ENCODE measurements at regions of chr4 and their contacts with region 1.

Region 1: DNA sequence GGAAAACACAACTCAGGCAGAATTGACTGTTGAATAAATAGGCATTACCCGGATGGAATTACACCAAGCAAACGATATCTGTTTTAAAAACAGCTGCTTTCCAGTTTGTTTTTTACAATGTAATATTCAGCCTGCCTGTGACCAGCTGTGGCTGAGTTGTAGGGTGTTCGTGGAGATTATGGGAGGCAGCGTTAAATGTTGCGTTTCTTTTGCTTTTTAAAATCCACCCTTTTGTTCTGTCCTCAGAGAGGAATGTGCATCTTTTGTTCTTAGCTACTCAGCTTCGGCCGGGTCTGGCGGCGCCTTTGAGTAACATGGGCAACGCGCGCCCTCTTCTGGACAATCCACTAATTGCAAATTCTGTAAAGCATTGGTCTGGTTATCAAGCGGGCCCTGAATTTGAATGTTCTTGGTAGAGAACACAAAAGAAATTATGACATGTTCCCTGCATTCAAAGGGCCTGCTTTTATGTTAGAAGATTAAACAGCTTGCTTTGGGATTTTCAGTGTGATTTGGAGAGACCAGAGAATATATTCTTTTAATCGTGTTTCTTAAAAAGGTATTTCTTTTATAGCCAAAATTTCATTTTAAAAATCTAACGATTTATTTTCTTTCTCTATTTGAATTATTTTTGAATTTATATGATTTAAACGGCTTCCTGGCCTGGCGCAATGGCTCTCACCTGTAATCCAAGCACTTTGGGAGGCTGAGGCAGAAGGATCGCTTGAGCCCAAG is 76.3 kb upstream of the TRIM2 start:
- DNase-seq: peak; percentile 76 to 91 (median 87)
- ATAC-seq: peak; percentile 94
- H3K4me3 ChIP-seq: no peak overlapping the region
- H3K4me3 Mint-ChIP-seq: no peak overlapping the region
- H3K27ac ChIP-seq: no peak overlapping the region
- H3K27ac Mint-ChIP-seq: peak overlapping the region; percentile 46
- H3K4me1 ChIP-seq: peaks cover 3% of the 10 kb centered on the region
- H3K4me1 Mint-ChIP-seq: peaks cover 6% of the 10 kb centered on the region
- H3K27me3 ChIP-seq: no peaks in the 10 kb centered on the region
- H3K27me3 Mint-ChIP-seq: no peaks in the 10 kb centered on the region
- CTCF ChIP-seq: peak; percentile 92

Region 2: GRCh38 chr4:152850377-152850776 is 277.6 kb before region 1 on chr4:
- CTCF ChIA-PET with region 1: interaction called, 44 read pairs
- POLR2A ChIA-PET with region 1: interaction called, 3 read pairs
- intact Hi-C with region 1: loop called (anchors 1 kb)
- DNase-seq: peak in 7 of 9 experiments; percentile 18 to 57 (median 33)
- ATAC-seq: peak; percentile 69
- H3K4me3 ChIP-seq: no peak overlapping the region
- H3K4me3 Mint-ChIP-seq: no peak overlapping the region
- H3K27ac ChIP-seq: no peak overlapping the region
- H3K27ac Mint-ChIP-seq: no peak overlapping the region
- H3K4me1 ChIP-seq: peaks cover 4% of the 10 kb centered on the region
- H3K4me1 Mint-ChIP-seq: peaks cover 24% of the 10 kb centered on the region
- H3K27me3 ChIP-seq: no peaks in the 10 kb centered on the region
- H3K27me3 Mint-ChIP-seq: no peaks in the 10 kb centered on the region
- CTCF ChIP-seq: no peak

Region 3: DNA sequence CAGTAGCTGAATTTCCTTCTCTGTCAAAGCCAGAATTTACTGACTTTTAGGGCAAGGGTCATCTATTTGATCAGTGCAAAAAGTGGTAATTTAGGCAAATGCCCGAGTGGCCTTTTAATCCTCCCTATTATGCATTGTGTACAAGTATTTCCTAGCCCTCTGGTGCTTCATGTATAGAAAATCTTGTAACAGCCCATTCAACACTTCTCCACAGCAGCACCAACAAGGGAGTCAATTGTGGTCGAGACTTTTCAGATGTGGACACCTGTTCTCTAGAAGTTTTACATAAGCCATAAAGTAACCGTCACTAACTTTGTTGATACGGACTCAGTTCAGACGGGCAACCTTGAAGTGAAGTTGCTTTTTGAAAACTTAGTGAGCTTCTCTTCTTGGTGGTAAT is 242.7 kb before region 1 on chr4:
- CTCF ChIA-PET with region 1: no interaction called
- POLR2A ChIA-PET with region 1: no interaction called
- intact Hi-C with region 1: no loop called
- DNase-seq: no peak
- ATAC-seq: no peak
- H3K4me3 ChIP-seq: no peak overlapping the region
- H3K4me3 Mint-ChIP-seq: no peak overlapping the region
- H3K27ac ChIP-seq: no peak overlapping the region
- H3K27ac Mint-ChIP-seq: no peak overlapping the region
- H3K4me1 ChIP-seq: no peaks in the 10 kb centered on the region
- H3K4me1 Mint-ChIP-seq: no peaks in the 10 kb centered on the region
- H3K27me3 ChIP-seq: no peaks in the 10 kb centered on the region
- H3K27me3 Mint-ChIP-seq: no peaks in the 10 kb centered on the region
- CTCF ChIP-seq: no peak

Region 4: DNA sequence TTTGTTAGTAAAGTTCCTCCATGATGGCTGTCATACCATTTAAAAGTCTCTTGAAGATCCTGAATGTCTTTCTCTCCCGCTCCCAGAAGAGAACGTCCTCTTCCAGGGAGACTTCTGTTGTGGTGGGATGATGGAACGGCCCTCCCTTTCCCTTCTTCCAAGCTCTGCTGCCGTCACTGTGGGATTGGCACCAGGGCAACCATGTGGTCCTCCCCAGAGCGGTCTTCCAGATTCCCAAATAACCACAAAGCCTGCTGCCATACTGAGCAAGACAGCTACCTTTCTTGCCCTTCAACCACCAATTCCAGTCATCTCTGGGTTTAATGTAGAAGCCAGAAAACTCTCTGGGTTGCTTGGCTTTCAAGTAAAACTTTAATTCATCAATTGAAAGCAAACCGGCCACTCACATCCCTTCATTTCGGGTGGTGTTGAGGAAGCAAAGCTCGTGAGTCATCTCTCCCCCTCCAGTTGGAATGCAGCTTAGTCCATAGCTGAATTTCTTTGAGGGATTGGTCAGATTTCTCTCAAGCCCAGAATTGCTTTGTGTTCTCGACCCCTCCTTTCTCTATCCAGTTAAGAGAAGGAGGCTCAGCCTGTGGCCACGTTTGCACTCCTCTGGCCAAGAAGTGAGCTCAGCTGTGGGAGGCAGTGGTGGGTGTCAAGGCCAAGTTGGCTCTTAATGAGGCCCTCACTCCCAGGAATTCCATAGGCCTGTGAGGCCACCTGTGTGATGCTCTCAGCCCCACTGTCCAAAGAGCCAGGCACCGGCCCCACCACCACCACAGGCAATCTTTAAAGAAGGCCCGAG is 154.9 kb before region 1 on chr4:
- CTCF ChIA-PET with region 1: no interaction called
- POLR2A ChIA-PET with region 1: no interaction called
- intact Hi-C with region 1: no loop called
- DNase-seq: no peak
- ATAC-seq: no peak
- H3K4me3 ChIP-seq: no peak overlapping the region
- H3K4me3 Mint-ChIP-seq: no peak overlapping the region
- H3K27ac ChIP-seq: no peak overlapping the region
- H3K27ac Mint-ChIP-seq: no peak overlapping the region
- H3K4me1 ChIP-seq: no peaks in the 10 kb centered on the region
- H3K4me1 Mint-ChIP-seq: no peaks in the 10 kb centered on the region
- H3K27me3 ChIP-seq: no peaks in the 10 kb centered on the region
- H3K27me3 Mint-ChIP-seq: no peaks in the 10 kb centered on the region
- CTCF ChIP-seq: no peak

Region 5: GRCh38 chr4:153083447-153083947 is 44.4 kb before region 1 on chr4:
- CTCF ChIA-PET with region 1: interaction called, 467 read pairs
- POLR2A ChIA-PET with region 1: interaction called, 20 read pairs
- intact Hi-C with region 1: loop called (anchors 1 kb)
- DNase-seq: peak in 8 of 9 experiments; percentile 14 to 82 (median 47)
- ATAC-seq: peak; percentile 42
- H3K4me3 ChIP-seq: no peak overlapping the region
- H3K4me3 Mint-ChIP-seq: no peak overlapping the region
- H3K27ac ChIP-seq: no peak overlapping the region
- H3K27ac Mint-ChIP-seq: no peak overlapping the region
- H3K4me1 ChIP-seq: peaks cover 57% of the 10 kb centered on the region
- H3K4me1 Mint-ChIP-seq: peaks cover 46% of the 10 kb centered on the region
- H3K27me3 ChIP-seq: no peaks in the 10 kb centered on the region
- H3K27me3 Mint-ChIP-seq: no peaks in the 10 kb centered on the region
- CTCF ChIP-seq: peak; percentile 77

Region 6: DNA sequence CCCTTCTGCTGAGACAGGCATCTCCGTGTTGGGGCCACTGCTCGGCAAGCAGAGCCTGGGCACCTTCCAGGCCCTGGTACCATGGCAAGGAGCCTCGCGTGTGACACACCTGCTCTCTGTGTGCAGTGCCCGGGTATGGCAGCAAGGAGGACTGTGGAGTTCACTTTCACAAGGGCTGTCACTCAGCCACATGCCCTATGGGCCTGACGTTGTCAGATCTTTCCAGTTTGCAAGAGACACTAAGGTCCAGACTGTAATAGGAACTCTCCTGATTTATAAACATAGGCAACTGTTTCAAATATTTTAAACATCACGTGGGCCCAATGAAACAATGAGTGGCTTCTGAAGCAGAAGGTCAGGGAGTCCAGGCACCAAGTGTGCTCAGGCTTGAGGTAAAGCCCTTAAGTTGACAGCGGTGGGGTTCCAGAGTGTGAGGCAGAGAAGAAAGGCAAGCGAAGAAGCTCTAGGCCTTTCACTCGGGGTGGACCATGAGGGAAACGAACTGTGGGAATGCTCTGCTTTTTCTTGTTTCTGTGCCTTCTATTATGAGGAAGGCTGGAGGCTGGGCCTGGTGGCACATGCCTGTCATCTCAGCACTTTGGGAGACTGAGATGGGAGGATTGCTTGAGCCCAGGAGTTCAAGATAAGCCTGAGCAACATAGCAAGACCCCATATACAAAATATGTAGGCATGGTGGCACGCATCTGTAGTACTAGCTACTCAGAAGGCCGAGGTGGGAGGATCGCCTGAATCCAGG is 32.3 kb before region 1 on chr4:
- CTCF ChIA-PET with region 1: interaction called, 64 read pairs
- POLR2A ChIA-PET with region 1: no interaction called
- intact Hi-C with region 1: no loop called
- DNase-seq: no peak
- ATAC-seq: no peak
- H3K4me3 ChIP-seq: no peak overlapping the region
- H3K4me3 Mint-ChIP-seq: no peak overlapping the region
- H3K27ac ChIP-seq: no peak overlapping the region
- H3K27ac Mint-ChIP-seq: no peak overlapping the region
- H3K4me1 ChIP-seq: peaks cover 4% of the 10 kb centered on the region
- H3K4me1 Mint-ChIP-seq: peaks cover 4% of the 10 kb centered on the region
- H3K27me3 ChIP-seq: no peaks in the 10 kb centered on the region
- H3K27me3 Mint-ChIP-seq: no peaks in the 10 kb centered on the region
- CTCF ChIP-seq: no peak

Region 7: GRCh38 chr4:153115322-153116290 is 12.3 kb before region 1 on chr4:
- CTCF ChIA-PET with region 1: interaction called, 113 read pairs
- POLR2A ChIA-PET with region 1: interaction called, 7 read pairs
- intact Hi-C with region 1: loop called in 1 of 2 experiments (anchors 1 kb)
- DNase-seq: peak; percentile 41 to 92 (median 76)
- ATAC-seq: peak; percentile 52
- H3K4me3 ChIP-seq: peak overlapping the region in 1 of 2 experiments; percentile 31
- H3K4me3 Mint-ChIP-seq: no peak overlapping the region
- H3K27ac ChIP-seq: peak overlapping the region; percentile 58 to 78
- H3K27ac Mint-ChIP-seq: no peak overlapping the region
- H3K4me1 ChIP-seq: peaks cover 64% of the 10 kb centered on the region
- H3K4me1 Mint-ChIP-seq: peaks cover 9% of the 10 kb centered on the region
- H3K27me3 ChIP-seq: no peaks in the 10 kb centered on the region
- H3K27me3 Mint-ChIP-seq: no peaks in the 10 kb centered on the region
- CTCF ChIP-seq: no peak

Region 8: GRCh38 chr4:153643406-153644383 is 515.8 kb after region 1 on chr4:
- CTCF ChIA-PET with region 1: interaction called, 17 read pairs
- POLR2A ChIA-PET with region 1: no interaction called
- intact Hi-C with region 1: no loop called
- DNase-seq: peak in 2 of 9 experiments; percentile 63 to 75
- ATAC-seq: peak; percentile 99
- H3K4me3 ChIP-seq: no peak overlapping the region
- H3K4me3 Mint-ChIP-seq: no peak overlapping the region
- H3K27ac ChIP-seq: no peak overlapping the region
- H3K27ac Mint-ChIP-seq: peak overlapping the region; percentile 49
- H3K4me1 ChIP-seq: no peaks in the 10 kb centered on the region
- H3K4me1 Mint-ChIP-seq: peaks cover 3% of the 10 kb centered on the region
- H3K27me3 ChIP-seq: no peaks in the 10 kb centered on the region
- H3K27me3 Mint-ChIP-seq: no peaks in the 10 kb centered on the region
- CTCF ChIP-seq: peak; percentile 62